ENCODE measurements at regions of chr4 and their contacts with region 1.

Region 1: GRCh38 chr4:55345980-55346850 is at the start of gene SRD5A3:
- DNase-seq: peak; percentile 90
- H3K4me3 ChIP-seq: peak within 1 kb of the TSS; percentile 60 to 84 (median 74)
- H3K27ac ChIP-seq: peak within 1 kb of the TSS; percentile 96 to 99 (median 98)
- H3K4me1 ChIP-seq: peaks cover 0 to 22% (median 11%) of the 10 kb centered on the region in 4 donors
- H3K27me3 ChIP-seq: no peaks in the 10 kb centered on the region
- CTCF ChIP-seq: peak; percentile 81 to 95 (median 94)
- EP300 ChIP-seq: no peak
- POLR2A ChIP-seq: peak; percentile 29
- total RNA-seq, gene SRD5A3: 1.2 to 13.5 (median 4.9) TPM

Region 2: GRCh38 chr4:55395529-55396307 is 49.5 kb after region 1 on chr4 and contains the start of gene TMEM165:
- in situ Hi-C with region 1: no loop called
- intact Hi-C with region 1: loop called (anchors 2 kb)
- DNase-seq: peak; percentile 97
- H3K4me3 ChIP-seq: peak within 1 kb of the TSS; percentile 86 to 99 (median 92)
- H3K27ac ChIP-seq: peak within 1 kb of the TSS; percentile 97 to 100 (median 98)
- H3K4me1 ChIP-seq: peaks cover 6 to 44% (median 32%) of the 10 kb centered on the region in 4 donors
- H3K27me3 ChIP-seq: no peaks in the 10 kb centered on the region
- CTCF ChIP-seq: no peak
- EP300 ChIP-seq: peak; percentile 48
- POLR2A ChIP-seq: peak; percentile 98
- total RNA-seq, gene TMEM165: 79.5 to 215 (median 136) TPM

Region 3: GRCh38 chr4:55546756-55547465 is 200.7 kb after region 1 on chr4 and contains the start of gene CLOCK:
- in situ Hi-C with region 1: loop called (anchors 10 to 25 kb)
- intact Hi-C with region 1: loop called (anchors 5 kb)
- DNase-seq: peak; percentile 86
- H3K4me3 ChIP-seq: peak within 1 kb of the TSS; percentile 72 to 97 (median 90)
- H3K27ac ChIP-seq: peak within 1 kb of the TSS; percentile 97 to 100 (median 98)
- H3K4me1 ChIP-seq: peaks cover 0 to 29% (median 19%) of the 10 kb centered on the region in 4 donors
- H3K27me3 ChIP-seq: no peaks in the 10 kb centered on the region
- CTCF ChIP-seq: peak; percentile 52 to 74 (median 63)
- EP300 ChIP-seq: no peak
- POLR2A ChIP-seq: peak; percentile 65
- total RNA-seq, gene CLOCK: 6.7 to 19.7 (median 16.9) TPM

Region 4: DNA sequence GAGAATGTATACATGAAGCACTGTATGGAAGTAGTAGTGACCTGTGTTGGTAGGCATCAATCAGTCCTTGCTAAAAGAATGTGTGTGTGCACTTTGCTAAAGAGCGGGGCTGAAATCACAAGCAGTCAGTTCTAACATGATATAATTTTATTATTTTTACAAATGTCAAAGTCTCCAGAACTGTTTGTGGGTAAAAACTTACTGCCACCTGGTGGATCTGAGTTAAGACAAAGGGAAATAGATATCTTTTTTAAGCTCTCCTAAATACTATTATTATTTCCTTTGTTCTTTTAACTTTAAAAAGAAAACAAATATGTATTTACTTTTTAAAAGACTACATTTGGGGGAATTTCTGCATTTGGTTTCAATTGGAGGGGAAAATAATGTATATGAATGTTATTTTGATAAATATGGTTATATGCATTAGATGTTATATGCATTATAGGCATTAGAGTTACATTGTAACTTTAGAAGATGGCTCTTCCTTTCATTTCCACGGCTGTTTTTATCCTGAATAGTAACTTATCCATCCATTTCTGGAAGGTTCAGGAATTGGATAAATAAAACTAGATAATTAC is 208.3 kb after region 1 on chr4:
- in situ Hi-C with region 1: loop called (anchors 10 to 25 kb)
- intact Hi-C with region 1: loop called (anchors 5 kb)
- DNase-seq: no peak
- H3K4me3 ChIP-seq: no peak overlapping the region
- H3K27ac ChIP-seq: no peak overlapping the region
- H3K4me1 ChIP-seq: peaks cover 0 to 10% (median 0%) of the 10 kb centered on the region in 4 donors
- H3K27me3 ChIP-seq: no peaks in the 10 kb centered on the region
- CTCF ChIP-seq: peak; percentile 32 to 45 (median 35)
- EP300 ChIP-seq: no peak
- POLR2A ChIP-seq: no peak

Region 5: GRCh38 chr4:55635741-55636655 is 289.8 kb after region 1 on chr4 and contains the start of gene NMU:
- in situ Hi-C with region 1: no loop called
- intact Hi-C with region 1: no loop called
- DNase-seq: peak; percentile 54
- H3K4me3 ChIP-seq: peak within 1 kb of the TSS in 3 of 4 donors; percentile 9 to 55 (median 33)
- H3K27ac ChIP-seq: no peak within 1 kb of the TSS
- H3K4me1 ChIP-seq: peaks cover 7 to 19% (median 13%) of the 10 kb centered on the region in 4 donors
- H3K27me3 ChIP-seq: peaks cover 65% of the 10 kb centered on the region
- CTCF ChIP-seq: no peak
- EP300 ChIP-seq: no peak
- POLR2A ChIP-seq: no peak
- total RNA-seq, gene NMU: 0.96 TPM in 1 of 4 donors, not detected in the others

Region 6: DNA sequence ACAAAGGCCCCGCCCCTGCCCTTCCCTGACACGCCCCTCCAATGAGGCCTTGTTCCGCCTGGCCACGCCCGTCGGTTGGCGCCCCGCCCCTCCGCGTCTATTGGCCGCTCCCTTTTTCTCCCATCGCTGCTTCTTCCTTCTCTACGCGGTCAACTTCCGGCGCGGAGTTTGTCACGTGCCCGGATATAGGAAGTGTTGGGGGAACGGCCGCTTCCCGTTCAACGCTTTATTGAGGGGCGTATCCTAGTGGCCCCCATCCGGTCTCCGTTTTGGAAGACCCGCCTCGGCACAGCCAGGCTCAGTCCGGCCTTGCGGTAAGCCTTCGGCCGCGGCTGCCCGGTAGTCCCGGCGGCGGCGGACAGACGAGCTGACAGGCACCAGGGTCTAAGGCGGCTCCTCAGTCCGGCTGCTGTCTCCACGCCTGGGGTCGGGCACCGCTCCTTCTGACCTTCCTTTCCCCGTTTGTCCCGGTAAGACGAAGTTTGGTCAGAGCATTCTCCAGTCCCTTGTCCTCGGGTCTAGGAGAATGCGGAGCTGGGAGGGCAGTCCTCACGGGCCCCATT is 507.4 kb after region 1 on chr4 and contains the start of gene EXOC1:
- in situ Hi-C with region 1: loop called in 3 of 4 experiments (anchors 25 kb)
- intact Hi-C with region 1: no loop called
- DNase-seq: peak; percentile 100
- H3K4me3 ChIP-seq: peak within 1 kb of the TSS; percentile 68 to 80 (median 70)
- H3K27ac ChIP-seq: peak within 1 kb of the TSS; percentile 83 to 87 (median 85)
- H3K4me1 ChIP-seq: peaks cover 0 to 27% (median 17%) of the 10 kb centered on the region in 4 donors
- H3K27me3 ChIP-seq: no peaks in the 10 kb centered on the region
- CTCF ChIP-seq: no peak
- EP300 ChIP-seq: no peak
- POLR2A ChIP-seq: peak; percentile 76
- total RNA-seq, gene EXOC1: 26.2 to 60.8 (median 43.1) TPM